ENCODE measurements at regions of chr14 and their contacts with region 1.

Region 1: DNA sequence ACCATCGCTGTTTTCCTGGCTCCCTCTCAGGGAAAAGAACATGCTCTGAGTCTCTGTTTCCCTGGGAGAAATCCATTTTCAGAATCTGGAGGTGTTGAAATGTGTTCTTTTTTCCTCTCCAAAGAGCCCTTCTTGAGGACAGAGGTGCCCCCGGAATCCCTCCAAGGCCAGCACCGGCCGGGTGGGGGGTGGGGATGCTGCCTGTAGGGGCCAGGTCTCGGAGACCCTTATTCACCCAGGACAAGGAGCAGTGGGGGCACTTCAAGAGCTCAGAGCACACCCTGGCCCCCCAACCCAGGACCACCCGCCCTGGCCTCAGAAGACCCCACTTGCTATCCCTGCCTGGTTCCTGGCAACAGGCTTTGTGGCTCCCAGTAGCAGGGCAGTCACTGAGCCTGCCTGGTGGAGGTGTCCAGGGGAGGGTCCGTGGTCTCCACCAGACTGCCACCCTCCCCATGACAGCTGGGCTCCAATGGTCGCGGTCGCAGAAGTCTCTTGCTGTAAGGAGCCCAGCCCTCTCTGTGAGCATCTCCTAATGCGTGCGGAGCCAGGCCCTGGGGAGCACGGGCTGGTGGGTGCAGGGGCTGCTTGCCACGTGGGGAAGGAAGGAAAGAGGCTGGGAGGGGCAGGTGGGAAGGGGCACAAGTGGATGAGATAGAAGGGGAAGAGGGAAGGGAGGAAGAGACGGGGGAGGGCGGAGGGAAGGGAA is 13.2 kb upstream of the DIO3 start:
- DNase-seq: no peak

Region 2: DNA sequence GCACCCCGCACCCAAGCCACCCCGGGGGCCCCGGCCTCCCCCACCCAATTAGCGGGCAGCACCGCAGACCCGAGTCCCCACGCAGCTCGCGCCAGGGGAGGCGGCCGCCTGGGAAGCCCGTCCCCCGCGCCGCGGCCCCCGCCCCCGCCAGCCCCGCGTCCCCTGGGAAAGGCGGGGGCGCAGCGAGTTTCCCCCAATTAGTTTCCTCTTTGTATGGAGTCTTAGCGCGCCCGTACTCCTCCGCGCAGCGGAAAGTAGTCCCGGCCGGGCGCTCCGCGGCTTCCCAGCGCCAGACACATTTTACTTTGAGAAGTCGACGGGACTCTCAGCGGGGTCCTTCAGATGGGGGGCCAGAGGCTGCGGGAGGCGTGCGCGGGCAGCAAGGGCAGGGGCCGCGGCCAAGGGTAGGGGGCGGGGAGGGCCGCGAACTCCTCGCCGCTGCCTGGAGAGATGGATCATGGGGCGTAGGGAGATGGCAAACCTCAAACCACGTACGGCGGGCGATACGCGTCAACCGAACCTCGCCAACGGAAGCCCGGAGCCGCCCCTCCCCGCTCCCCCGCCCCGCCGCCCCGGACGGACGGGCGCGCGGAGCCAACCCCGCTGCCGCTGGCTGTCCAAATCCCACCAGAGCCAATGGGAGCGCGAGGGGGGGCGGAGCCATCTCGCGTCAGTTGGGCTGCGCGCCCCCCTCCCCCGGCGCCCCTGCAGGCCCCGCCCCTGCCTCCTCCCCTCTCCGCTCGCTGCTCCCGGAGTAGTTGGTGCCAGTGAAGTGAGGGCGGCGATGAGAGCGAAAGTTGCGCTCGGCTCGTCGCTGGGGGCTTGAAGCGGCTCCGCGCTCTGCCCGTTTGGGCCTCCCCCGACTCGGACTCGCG is 1044.0 kb after region 1 on chr14 and contains the start of gene RCOR1:
- intact Hi-C with region 1: loop called in 1 of 2 experiments (anchors 5 kb)
- DNase-seq: peak; percentile 99
- total RNA-seq, gene RCOR1: 12.6 to 15.4 TPM